A549 (cell line): ENCODE measurements at regions of chr14 and their contacts with region 1.

Region 1: DNA sequence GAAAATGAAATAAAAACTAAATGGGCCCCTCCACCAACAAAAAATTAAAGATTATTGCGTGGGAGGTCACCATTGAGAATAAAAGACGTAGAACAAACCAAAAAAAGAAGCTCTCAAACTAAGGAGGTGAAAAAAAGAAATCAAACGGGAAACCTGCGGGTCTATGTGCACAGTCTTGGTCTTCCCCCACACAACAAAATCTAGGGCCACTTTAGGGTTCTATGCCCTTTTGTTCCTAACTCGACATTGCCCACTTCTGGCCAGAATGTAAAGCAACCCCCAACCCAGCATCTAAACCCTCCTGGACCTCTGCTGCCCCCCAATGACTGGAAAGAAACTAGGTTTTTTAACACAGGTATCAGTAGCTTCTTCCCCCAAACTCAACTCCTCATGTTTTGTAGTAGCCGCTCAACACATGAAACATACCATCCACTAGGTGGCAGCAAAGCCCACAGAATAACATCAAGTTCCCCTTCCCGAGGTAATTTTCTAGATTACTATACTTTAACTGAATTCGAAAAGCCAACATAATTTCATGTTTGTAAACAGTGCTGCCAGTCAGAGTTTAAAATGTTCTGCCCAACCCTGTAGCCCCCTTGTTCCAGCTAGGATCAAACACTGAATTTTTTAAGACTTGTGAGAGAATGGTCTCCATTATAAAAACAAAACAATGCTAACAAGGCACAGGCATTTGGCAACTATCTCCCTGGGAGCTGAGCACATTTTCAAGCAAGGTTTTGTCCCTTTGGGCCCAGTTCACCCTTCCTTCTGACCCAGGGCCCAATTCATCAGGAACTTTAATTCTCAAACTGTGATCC is 18.7 kb downstream of the DAD1 start:
- DNase-seq: peak; percentile 78 to 89
- ATAC-seq: peak; percentile 82 to 87
- H3K4me3 ChIP-seq: no peak overlapping the region
- H3K27ac ChIP-seq: peak overlapping the region; percentile 51 to 80; a peak in 5 of 6 replicates
- H3K4me1 ChIP-seq: peaks cover 37% of the 10 kb centered on the region
- CTCF ChIP-seq: peak; percentile 95
- EP300 ChIP-seq: no peak
- POLR2A ChIP-seq: no peak
- RAD21 ChIP-seq: peak; percentile 92 to 95

Region 2: DNA sequence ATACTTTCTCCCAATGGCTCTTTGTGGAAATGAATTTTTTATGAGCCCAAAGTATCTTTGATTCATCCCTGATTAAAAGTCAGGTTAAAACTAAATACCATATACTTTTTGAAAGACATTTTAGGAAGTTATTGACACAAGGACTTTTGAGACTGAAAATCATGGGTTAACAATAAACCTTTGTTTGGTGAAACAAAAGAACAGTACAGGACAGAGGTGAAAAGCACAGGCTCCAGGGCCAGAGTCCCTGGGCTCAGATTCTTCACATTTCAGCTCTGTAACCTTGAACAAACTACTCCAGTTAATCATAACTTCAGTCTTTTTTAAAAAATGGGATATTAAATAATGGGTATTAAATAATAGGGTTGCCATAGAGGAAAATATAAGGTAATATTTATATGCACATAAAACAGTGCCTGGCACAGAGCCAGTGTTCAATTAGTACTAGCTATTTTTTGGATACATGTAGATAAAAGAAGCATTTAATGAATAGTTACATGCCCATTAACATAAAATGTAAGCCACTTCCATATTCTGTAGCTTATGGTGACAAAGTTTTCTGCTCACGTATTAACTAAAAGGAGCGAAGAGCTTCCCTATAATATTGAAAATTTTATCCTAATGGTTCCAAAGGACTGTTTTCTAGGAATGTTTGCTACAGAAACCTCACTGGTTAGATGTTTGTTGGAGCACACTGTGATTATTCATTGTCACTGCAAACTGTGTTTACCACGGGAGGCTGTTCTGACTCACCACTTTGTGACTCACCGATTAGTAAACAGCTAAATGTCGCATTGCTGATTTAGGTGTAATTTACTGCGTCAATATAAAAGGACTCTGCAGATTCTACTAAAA is 236.7 kb before region 1 on chr14:
- CTCF ChIA-PET with region 1: no interaction called
- POLR2A ChIA-PET with region 1: no interaction called
- DNase-seq: peak; percentile 73 to 88
- ATAC-seq: peak; percentile 94
- H3K4me3 ChIP-seq: peak overlapping the region; percentile 8; the same call in 1 of the 3 replicates
- H3K27ac ChIP-seq: peak overlapping the region; percentile 4 to 26; a peak in 3 of 6 replicates
- H3K4me1 ChIP-seq: peaks cover 30% of the 10 kb centered on the region
- CTCF ChIP-seq: no peak
- EP300 ChIP-seq: peak; percentile 38 to 48; a peak in 2 of 5 replicates
- POLR2A ChIP-seq: no peak
- RAD21 ChIP-seq: 0 out of 5 replicates have a peak, but pooled peaks of 1 of the 2 experiments have one; percentile 9

Region 3: GRCh38 chr14:22539831-22540230 is 30.5 kb before region 1 on chr14:
- CTCF ChIA-PET with region 1: interaction called, 15 read pairs
- POLR2A ChIA-PET with region 1: no interaction called
- DNase-seq: no peak
- ATAC-seq: no peak
- H3K4me3 ChIP-seq: no peak overlapping the region
- H3K27ac ChIP-seq: peak overlapping the region; percentile 27 to 48; a peak in 5 of 6 replicates
- H3K4me1 ChIP-seq: peaks cover 20% of the 10 kb centered on the region
- CTCF ChIP-seq: no peak
- EP300 ChIP-seq: no peak
- POLR2A ChIP-seq: no peak
- RAD21 ChIP-seq: no peak

Region 4: GRCh38 chr14:22614224-22614799 is 44.0 kb after region 1 on chr14:
- CTCF ChIA-PET with region 1: interaction called, 11 read pairs
- POLR2A ChIA-PET with region 1: no interaction called
- DNase-seq: peak; percentile 81 to 94
- ATAC-seq: peak; percentile 93 to 94
- H3K4me3 ChIP-seq: no peak overlapping the region
- H3K27ac ChIP-seq: peak overlapping the region; percentile 71 to 89
- H3K4me1 ChIP-seq: peaks cover 31% of the 10 kb centered on the region
- CTCF ChIP-seq: no peak
- EP300 ChIP-seq: peak in 1 of 2 experiments; percentile 74; a peak in 2 of 5 replicates
- POLR2A ChIP-seq: no peak
- RAD21 ChIP-seq: no peak

Region 5: DNA sequence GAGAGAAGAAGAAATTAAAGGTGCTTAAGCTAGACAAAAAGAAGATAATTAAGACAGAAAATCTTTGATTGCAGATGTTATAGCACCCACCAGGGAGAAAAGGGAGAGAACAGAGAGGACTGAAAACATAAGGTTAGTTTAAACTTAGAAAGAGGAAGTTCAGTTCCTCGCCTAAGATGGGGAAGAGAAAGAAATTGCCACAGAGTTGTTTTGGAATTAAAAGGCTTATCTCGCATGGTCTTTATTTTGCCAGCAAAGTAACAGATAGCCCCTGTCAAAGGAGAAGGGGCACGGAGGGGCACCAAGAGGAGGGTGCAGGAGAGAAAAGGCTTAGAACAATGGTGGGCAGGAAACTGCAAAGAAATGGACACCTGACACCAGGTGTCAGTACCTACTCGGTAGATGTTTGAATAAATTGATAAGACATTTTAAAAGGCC is 178.3 kb after region 1 on chr14:
- CTCF ChIA-PET with region 1: interaction called, 15 read pairs
- POLR2A ChIA-PET with region 1: no interaction called
- DNase-seq: no peak
- ATAC-seq: no peak
- H3K4me3 ChIP-seq: no peak overlapping the region
- H3K27ac ChIP-seq: no peak overlapping the region
- H3K4me1 ChIP-seq: no peaks in the 10 kb centered on the region
- CTCF ChIP-seq: no peak
- EP300 ChIP-seq: no peak
- POLR2A ChIP-seq: no peak
- RAD21 ChIP-seq: no peak

Region 6: DNA sequence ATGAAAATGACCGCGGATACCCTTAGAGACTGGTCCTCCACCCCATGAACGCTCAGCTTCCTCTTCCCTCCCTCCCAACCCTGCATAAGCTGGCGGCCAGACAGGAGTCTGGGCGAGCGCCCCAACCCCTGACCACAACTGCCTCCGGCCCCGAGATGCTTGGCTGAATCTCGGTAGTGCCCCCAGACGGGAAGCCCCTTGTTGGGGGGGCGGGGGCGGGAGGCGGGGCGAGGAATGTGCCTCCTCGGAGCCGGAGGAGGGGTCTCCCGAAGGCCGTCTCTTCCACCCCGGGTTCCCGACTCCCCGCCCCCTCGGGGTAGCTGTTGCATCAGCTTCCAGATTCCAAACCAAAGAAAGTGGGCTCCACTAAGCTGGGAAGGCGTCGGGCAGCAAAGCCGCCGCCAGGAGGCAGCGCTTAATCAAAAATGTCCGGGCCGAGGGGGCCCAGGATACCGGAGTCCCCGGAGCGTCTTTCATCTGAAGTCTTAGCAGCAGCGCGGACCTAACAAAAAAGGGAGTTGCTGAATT is 252.3 kb after region 1 on chr14:
- CTCF ChIA-PET with region 1: interaction called, 17 read pairs
- POLR2A ChIA-PET with region 1: no interaction called
- DNase-seq: peak; percentile 83 to 88
- ATAC-seq: peak; percentile 68 to 90
- H3K4me3 ChIP-seq: peak overlapping the region; percentile 33
- H3K27ac ChIP-seq: peak overlapping the region; percentile 82 to 93
- H3K4me1 ChIP-seq: peaks cover 74% of the 10 kb centered on the region
- CTCF ChIP-seq: peak; percentile 85
- EP300 ChIP-seq: no peak
- POLR2A ChIP-seq: no peak
- RAD21 ChIP-seq: peak; percentile 85 to 94

Region 7: DNA sequence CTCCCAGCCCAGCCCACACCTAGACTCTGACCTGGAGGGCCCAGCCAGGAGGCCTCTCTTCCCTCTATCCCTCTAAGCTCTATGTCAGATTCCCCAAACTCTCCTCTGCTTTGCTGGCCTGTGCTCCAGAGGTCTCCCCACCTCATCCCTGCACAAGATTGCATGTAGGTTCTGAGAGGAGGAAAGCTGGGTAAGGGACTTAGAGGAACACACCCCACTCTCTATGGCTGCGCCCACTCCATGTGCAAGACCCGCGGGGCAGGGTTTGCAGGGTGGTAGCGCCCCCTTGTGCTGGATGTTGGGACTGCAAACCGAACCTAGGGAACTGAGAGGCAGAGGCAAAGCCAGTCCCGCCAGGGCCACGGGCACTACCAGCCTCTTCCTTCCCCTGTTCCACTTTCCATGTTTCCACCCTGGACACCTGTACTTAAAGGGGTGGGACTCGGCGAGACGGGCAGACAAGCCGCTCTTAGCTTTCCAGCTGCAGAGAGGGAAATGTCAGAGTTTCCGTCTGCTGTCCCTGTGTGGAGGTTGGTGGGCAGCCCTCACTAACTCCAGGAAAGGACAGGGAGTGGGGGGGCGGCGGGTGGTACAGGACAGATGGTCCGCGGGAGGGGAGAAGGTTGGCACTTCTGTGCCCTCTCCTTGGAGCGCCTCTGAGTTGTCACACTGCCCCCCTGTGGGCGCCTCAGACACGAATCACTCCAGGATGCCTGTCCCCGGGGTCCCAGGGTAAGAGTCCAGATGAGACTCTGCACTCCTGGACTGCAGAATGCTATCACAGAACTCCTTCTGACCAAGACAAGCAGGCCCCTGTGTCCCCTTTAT is 282.8 kb after region 1 on chr14:
- CTCF ChIA-PET with region 1: interaction called, 111 read pairs
- POLR2A ChIA-PET with region 1: no interaction called
- DNase-seq: peak; percentile 70 to 82
- ATAC-seq: peak; percentile 91 to 96
- H3K4me3 ChIP-seq: peak overlapping the region; percentile 57
- H3K27ac ChIP-seq: peak overlapping the region; percentile 91 to 98
- H3K4me1 ChIP-seq: peaks cover 4% of the 10 kb centered on the region; the same call in 2 of the 3 replicates
- CTCF ChIP-seq: peak; percentile 92
- EP300 ChIP-seq: no peak
- POLR2A ChIP-seq: no peak
- RAD21 ChIP-seq: peak; percentile 91 to 97